ENCODE measurements at regions of chr9 and their contacts with region 1.

Region 1: DNA sequence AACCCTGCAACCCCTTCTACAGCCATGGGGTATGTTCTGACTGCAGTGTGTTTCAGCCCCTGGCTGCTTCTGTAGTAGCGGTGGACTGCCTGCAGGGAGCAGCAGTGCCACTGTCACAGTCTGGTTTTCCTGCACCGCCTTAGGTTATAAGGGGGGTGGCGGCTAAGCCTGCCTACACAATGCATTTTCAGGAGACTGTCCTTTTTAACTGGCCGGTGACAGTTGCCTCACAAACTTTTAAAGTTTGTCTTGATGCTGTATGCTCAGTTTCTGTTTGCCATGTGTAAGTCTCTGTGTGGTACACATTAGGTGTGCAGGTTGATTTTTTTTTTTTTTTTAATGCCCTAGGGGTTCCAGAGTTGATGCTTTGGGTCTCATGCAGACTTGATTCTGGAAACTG is 53.0 kb downstream of the NUP214 start:
- DNase-seq: peak; percentile 83
- H3K4me3 ChIP-seq: no peak overlapping the region; a peak in 1 of 4 replicates
- H3K27ac ChIP-seq: peak overlapping the region in 1 of 2 experiments; percentile 96; a peak in 2 of 4 replicates
- H3K4me1 ChIP-seq: peaks cover 0 to 24% of the 10 kb centered on the region in 2 experiments; a peak in 2 of 4 replicates
- H3K27me3 ChIP-seq: no peaks in the 10 kb centered on the region
- CTCF ChIP-seq: peak; percentile 93
- EP300 ChIP-seq: no peak
- RAD21 ChIP-seq: peak; percentile 83

Region 2: DNA sequence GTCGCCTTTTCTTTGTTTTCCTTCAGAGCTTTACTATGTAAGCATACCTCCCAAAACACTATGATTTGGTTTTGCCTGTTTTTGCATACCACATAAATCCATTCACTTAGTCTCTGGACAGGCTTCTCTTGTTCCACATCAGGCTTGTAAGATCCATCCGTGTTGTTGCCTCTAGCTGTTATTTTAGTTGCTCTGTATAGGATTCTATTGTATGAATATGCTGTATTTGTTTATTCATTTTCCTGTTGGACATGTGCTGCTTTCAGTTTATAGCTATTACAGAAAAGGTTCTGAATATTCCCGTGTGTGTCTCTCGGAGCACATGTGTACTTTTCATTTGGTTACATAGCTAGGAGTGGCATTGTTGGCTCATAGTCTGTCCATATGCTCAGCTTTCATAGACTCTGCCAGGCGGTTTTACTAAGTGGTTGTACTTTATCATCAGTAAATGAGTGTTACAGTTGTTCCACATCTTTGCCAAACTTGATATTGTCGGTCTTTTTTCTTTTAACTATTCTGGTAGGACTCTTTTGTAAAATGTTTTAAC is 11.2 kb before region 1 on chr9:
- CTCF ChIA-PET with region 1: interaction called, 12 read pairs
- POLR2A ChIA-PET with region 1: no interaction called
- DNase-seq: no peak
- H3K4me3 ChIP-seq: no peak overlapping the region
- H3K27ac ChIP-seq: no peak overlapping the region
- H3K4me1 ChIP-seq: no peaks in the 10 kb centered on the region
- H3K27me3 ChIP-seq: no peaks in the 10 kb centered on the region
- CTCF ChIP-seq: no peak
- EP300 ChIP-seq: no peak
- RAD21 ChIP-seq: no peak